ENCODE measurements at regions of chr7 and their contacts with region 1.

Region 1: GRCh38 chr7:29639881-29640595 is 76.4 kb downstream of the PRR15 start:
- DNase-seq: no peak
- H3K4me3 ChIP-seq: no peak overlapping the region
- H3K27ac ChIP-seq: no peak overlapping the region
- H3K4me1 ChIP-seq: peaks cover 0 to 7% (median 6%) of the 10 kb centered on the region in 4 donors
- H3K27me3 ChIP-seq: no peaks in the 10 kb centered on the region
- CTCF ChIP-seq: no peak
- EP300 ChIP-seq: no peak
- POLR2A ChIP-seq: no peak

Region 2: DNA sequence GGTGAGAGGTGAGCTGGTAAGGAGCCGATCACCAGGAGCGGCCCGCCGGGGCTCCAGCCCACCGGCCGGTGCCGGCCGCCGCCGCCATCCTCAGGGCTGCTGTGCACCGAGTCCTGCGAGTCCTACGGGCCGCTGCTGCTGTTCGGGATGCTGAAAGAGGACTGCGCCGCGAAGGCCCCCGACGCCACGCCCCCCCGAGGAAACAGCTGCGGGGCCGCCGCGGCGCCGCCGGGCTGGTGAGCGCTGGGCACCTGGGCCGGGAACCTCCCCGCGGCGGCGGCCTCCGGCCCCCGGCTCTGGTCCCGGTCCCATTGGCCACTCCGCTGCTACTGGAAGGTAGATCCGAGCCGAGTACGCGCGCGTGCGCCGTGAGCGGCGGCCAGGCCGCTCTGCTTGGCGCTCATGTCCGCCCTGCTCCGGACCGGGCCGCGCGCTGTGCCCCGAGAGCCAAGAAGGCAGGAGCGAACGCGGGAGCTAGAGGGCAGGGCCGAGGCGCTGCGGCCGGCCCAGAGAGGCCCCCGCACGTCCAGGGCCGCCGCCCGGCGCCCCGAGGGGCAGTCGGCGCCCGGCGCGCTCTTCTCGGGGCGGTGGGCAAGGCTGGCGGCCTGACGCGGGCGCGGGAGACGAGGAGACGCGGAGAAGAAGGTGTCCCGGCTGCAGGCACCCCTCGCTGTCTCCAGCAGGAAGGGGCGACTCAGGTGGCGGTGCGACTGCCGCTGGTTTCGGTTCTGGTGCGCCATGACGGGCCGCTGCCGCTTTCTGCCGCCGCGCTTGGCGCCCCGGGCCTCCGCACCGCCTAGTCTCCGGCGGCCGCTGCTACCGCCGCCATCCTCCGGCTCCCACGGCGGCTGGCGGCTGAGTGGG is 45.0 kb after region 1 on chr7:
- intact Hi-C with region 1: loop called (anchors 5 kb)
- DNase-seq: peak; percentile 88
- H3K4me3 ChIP-seq: peak overlapping the region; percentile 74 to 97 (median 88)
- H3K27ac ChIP-seq: peak overlapping the region; percentile 93 to 99 (median 96)
- H3K4me1 ChIP-seq: peaks cover 0 to 18% (median 8%) of the 10 kb centered on the region in 4 donors
- H3K27me3 ChIP-seq: no peaks in the 10 kb centered on the region
- CTCF ChIP-seq: no peak
- EP300 ChIP-seq: no peak
- POLR2A ChIP-seq: no peak

Region 3: DNA sequence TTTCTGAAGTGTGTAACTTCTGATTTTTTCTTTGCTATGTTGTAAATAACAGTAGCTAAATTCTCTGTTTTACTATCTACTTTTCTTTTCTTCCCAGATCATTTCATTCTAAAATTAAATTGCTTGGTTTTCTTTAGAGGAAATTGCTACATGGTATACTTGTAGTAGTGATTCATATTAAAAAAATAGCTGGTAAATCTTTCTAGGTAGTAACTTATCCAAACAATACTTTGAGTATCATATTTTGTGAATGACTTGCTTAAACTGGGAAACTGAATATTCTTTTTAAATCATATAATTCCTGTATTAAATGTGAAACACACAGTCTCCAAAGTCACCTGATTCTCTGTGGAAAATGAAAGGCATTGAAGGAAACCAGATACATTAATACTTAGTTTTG is 729.8 kb after region 1 on chr7:
- intact Hi-C with region 1: no loop called
- DNase-seq: no peak
- H3K4me3 ChIP-seq: no peak overlapping the region
- H3K27ac ChIP-seq: no peak overlapping the region
- H3K4me1 ChIP-seq: no peaks in the 10 kb centered on the region
- H3K27me3 ChIP-seq: no peaks in the 10 kb centered on the region
- CTCF ChIP-seq: no peak
- EP300 ChIP-seq: no peak
- POLR2A ChIP-seq: no peak